ENCODE measurements at regions of chr15 and their contacts with region 1.

Region 1: GRCh38 chr15:22974745-22975144 is 5.4 kb downstream of the CYFIP1 start:
- DNase-seq: no peak
- H3K4me3 ChIP-seq: no peak overlapping the region
- H3K27ac ChIP-seq: no peak overlapping the region
- H3K4me1 ChIP-seq: 0 out of 2 replicates have a peak, but pooled peaks cover 4% of the 10 kb centered on the region
- H3K27me3 ChIP-seq: no peaks in the 10 kb centered on the region
- CTCF ChIP-seq: no peak

Region 2: GRCh38 chr15:23014394-23015000 is 39.8 kb after region 1 on chr15:
- CTCF ChIA-PET with region 1: no interaction called
- POLR2A ChIA-PET with region 1: interaction called, 12 read pairs
- intact Hi-C with region 1: no loop called
- DNase-seq: no peak
- H3K4me3 ChIP-seq: no peak overlapping the region
- H3K27ac ChIP-seq: no peak overlapping the region
- H3K4me1 ChIP-seq: no peaks in the 10 kb centered on the region
- H3K27me3 ChIP-seq: no peaks in the 10 kb centered on the region
- CTCF ChIP-seq: no peak

Region 3: DNA sequence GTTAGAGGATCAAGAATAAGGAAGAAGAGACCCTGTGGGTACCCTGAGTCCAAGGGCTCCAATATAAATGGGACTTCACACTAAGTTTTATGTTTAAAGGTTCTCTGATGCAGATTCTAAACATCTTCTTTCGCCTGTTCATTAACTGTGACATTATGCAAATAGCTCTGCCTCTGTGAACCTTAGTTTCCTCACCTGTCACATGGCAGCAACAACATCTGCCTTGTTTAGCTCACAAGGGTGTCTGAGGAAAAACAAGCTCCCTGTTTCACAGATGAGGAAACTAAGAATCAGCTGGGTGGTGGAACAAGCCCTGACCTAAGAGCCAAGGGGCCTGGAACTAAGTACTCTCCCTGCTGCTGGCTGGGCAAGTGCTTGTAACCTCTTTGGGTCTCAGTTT is 121.1 kb after region 1 on chr15:
- CTCF ChIA-PET with region 1: no interaction called
- POLR2A ChIA-PET with region 1: no interaction called
- intact Hi-C with region 1: no loop called
- DNase-seq: no peak
- H3K4me3 ChIP-seq: no peak overlapping the region
- H3K27ac ChIP-seq: no peak overlapping the region
- H3K4me1 ChIP-seq: no peaks in the 10 kb centered on the region
- H3K27me3 ChIP-seq: peaks cover 44% of the 10 kb centered on the region
- CTCF ChIP-seq: no peak

Measured in PC-9 (cell line).